ENCODE measurements at regions of chr7 and their contacts with region 1.

Region 1: GRCh38 chr7:104983578-104984539 is 30.1 kb upstream of the KMT2E start:
- DNase-seq: peak; percentile 57 to 95
- H3K4me3 ChIP-seq: peak overlapping the region; percentile 65 to 69
- H3K27ac ChIP-seq: peak overlapping the region; percentile 91 to 98
- H3K4me1 ChIP-seq: peaks cover 6 to 43% of the 10 kb centered on the region in 2 donors
- H3K27me3 ChIP-seq: no peaks in the 10 kb centered on the region
- CTCF ChIP-seq: peak; percentile 57 to 64 (median 62)

Region 2: GRCh38 chr7:104943502-104944343 is 40.1 kb before region 1 on chr7:
- intact Hi-C with region 1: loop called (anchors 2 kb)
- DNase-seq: peak in 1 of 2 donors; percentile 75
- H3K4me3 ChIP-seq: no peak overlapping the region
- H3K27ac ChIP-seq: peak overlapping the region; percentile 91 to 95
- H3K4me1 ChIP-seq: peaks cover 7 to 28% of the 10 kb centered on the region in 2 donors
- H3K27me3 ChIP-seq: no peaks in the 10 kb centered on the region
- CTCF ChIP-seq: no peak

Region 3: DNA sequence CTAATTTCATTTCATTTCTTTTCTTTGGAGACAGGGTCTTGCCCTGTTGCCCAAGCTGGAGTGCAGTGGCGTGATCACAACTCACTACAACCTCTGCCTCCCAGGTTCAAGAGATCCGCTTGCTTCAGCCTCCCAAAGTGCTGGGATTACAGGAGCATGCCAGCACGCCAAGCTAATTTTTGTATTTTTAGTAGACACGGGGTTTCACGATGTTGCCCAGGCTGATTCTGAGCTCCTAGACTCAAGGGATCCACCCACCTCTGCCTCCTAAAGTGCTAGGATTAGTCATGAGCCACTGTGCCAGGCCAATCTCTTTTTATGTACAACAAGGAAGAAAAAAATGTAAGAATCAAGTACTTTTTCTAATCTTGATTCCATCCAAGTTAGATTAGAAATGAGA is 19.4 kb after region 1 on chr7:
- intact Hi-C with region 1: no loop called
- DNase-seq: peak; percentile 44 to 90
- H3K4me3 ChIP-seq: peak overlapping the region; percentile 44 to 46
- H3K27ac ChIP-seq: peak overlapping the region; percentile 97 to 100
- H3K4me1 ChIP-seq: peaks cover 16 to 71% of the 10 kb centered on the region in 2 donors
- H3K27me3 ChIP-seq: no peaks in the 10 kb centered on the region
- CTCF ChIP-seq: no peak

Region 4: DNA sequence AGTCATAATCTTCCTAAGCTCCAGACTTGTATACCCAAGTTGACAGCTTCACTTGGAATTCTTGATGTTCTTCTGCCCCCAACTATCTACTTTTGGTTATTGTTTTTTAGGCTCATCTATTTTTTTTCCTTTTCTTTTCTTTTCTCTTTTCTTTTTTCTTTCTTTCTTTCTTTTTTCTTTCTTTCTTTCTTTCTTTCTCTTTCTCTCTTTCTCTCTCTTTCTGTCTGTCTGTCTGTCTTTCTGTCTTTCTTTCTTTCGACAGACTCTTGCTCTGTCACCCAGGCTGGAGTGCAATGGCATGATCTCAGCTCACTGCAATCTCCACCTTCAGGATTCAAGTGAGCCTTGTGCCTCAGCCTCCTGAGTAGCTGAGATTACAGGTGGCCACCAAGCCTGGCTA is 66.6 kb after region 1 on chr7:
- intact Hi-C with region 1: loop called (anchors 5 kb)
- DNase-seq: no peak
- H3K4me3 ChIP-seq: no peak overlapping the region
- H3K27ac ChIP-seq: peak overlapping the region in 1 of 2 donors; percentile 29
- H3K4me1 ChIP-seq: peaks cover 6 to 27% of the 10 kb centered on the region in 2 donors
- H3K27me3 ChIP-seq: no peaks in the 10 kb centered on the region
- CTCF ChIP-seq: no peak

Region 5: DNA sequence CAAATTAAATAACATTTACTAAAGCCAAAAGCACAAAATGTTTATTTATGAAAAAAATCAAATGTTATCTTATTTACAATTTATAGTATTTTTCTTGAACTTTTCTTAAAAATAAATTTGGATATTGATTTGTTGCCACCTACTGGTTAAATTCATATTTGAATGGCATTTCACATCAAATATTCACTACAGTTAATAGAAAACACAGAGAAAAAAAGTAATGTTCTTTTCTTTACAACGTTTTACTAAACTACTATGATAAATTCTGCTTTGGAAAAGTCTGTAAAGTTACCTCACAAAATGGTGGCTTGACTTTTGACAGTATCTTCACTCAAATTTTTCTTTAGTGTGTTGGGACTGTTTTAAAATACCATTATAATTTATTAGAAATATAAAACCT is 352.1 kb after region 1 on chr7:
- intact Hi-C with region 1: loop called (anchors 10 kb)
- DNase-seq: no peak
- H3K4me3 ChIP-seq: no peak overlapping the region
- H3K27ac ChIP-seq: no peak overlapping the region
- H3K4me1 ChIP-seq: no peaks in the 10 kb centered on the region
- H3K27me3 ChIP-seq: no peaks in the 10 kb centered on the region
- CTCF ChIP-seq: peak; percentile 11 to 41 (median 12)

Measured in ascending aorta (tissue), 2 donors.